Right cardiac atrium (tissue), 5 donors: ENCODE measurements at regions of chr9 and their contacts with region 1.

Region 1: DNA sequence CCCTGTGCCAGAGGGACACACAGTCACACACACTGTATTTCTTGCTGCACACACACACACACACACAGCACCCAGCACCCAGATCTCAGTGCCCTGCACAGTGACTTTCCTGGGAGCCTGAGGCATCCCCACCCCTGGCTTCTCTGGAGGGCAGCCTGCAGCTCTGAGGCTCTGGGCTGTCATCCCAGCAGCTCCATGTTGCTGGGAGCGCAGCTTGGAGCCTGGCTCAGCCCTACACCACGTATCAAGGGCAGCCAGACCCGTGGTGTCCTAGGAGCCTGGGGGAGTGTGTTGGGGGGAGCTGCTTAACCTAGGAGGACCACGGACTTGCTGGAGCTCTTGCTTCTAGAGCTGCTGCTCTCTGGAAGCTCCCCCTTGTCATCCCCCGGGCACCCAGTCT is 5.3 kb downstream of the IER5L start:
- DNase-seq: peak in 2 of 3 donors; percentile 76 to 81
- ATAC-seq: no peak
- H3K4me3 ChIP-seq: no peak overlapping the region
- H3K27ac ChIP-seq: peak overlapping the region; percentile 10
- H3K4me1 ChIP-seq: no peaks in the 10 kb centered on the region
- H3K27me3 ChIP-seq: no peaks in the 10 kb centered on the region

Region 2: GRCh38 chr9:128979111-128979510 is 193.7 kb before region 1 on chr9:
- intact Hi-C with region 1: no loop called
- DNase-seq: no peak
- ATAC-seq: no peak
- H3K4me3 ChIP-seq: no peak overlapping the region
- H3K27ac ChIP-seq: no peak overlapping the region
- H3K4me1 ChIP-seq: no peaks in the 10 kb centered on the region
- H3K27me3 ChIP-seq: no peaks in the 10 kb centered on the region

Region 3: DNA sequence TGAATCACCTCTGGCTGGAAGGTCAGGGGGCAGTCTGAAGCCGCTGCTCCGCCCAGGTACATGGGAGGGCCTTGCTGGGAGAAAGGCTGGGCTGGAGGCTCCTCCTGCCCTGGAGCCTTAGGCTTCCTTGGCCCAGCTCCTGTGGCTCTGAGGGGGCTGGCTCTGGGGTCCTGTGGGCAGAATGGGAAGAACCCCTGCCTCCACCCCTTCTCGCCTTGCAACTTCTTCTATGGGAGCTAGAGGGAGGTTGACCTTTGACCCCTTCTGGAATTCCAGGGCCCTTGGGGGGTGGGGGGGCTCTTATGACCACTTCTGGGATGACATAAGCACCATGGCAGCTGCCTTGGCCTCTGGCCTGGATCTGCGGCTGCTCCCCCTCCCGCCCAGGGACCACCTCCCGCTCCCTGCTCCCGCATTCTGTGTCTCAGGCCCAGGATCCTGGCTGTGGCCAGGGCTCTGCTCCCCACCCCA is 26.9 kb before region 1 on chr9:
- intact Hi-C with region 1: loop called in 2 of 4 experiments (anchors 2 kb)
- DNase-seq: peak; percentile 73 to 89 (median 84)
- ATAC-seq: peak in 1 of 2 donors; percentile 6
- H3K4me3 ChIP-seq: no peak overlapping the region
- H3K27ac ChIP-seq: peak overlapping the region; percentile 86
- H3K4me1 ChIP-seq: peaks cover 24% of the 10 kb centered on the region
- H3K27me3 ChIP-seq: no peaks in the 10 kb centered on the region